Activated T-helper 1 cell treated with anti-CD3 and anti-CD28 coated beads, Interleukin-12 subunit alpha, Interleukin-12 subunit beta, Interleukin-2, Interleukin-4 antibody, amounts not matched to agents 30 ng/mL and 10 ng/mL and 1 ng/mL, durations not matched to agents 14 hours and 24 hours and 36 hours (primary cell): ENCODE measurements at regions of chr1 and their contacts with region 1.

Region 1: GRCh38 chr1:89310505-89310904 is 37.8 kb upstream of the GBP5 start:
- DNase-seq: no peak
- H3K4me3 Mint-ChIP-seq: peak overlapping the region; percentile 47
- H3K27ac Mint-ChIP-seq: peak overlapping the region; percentile 87
- H3K4me1 Mint-ChIP-seq: peaks cover 64% of the 10 kb centered on the region
- H3K27me3 Mint-ChIP-seq: no peaks in the 10 kb centered on the region

Region 2: DNA sequence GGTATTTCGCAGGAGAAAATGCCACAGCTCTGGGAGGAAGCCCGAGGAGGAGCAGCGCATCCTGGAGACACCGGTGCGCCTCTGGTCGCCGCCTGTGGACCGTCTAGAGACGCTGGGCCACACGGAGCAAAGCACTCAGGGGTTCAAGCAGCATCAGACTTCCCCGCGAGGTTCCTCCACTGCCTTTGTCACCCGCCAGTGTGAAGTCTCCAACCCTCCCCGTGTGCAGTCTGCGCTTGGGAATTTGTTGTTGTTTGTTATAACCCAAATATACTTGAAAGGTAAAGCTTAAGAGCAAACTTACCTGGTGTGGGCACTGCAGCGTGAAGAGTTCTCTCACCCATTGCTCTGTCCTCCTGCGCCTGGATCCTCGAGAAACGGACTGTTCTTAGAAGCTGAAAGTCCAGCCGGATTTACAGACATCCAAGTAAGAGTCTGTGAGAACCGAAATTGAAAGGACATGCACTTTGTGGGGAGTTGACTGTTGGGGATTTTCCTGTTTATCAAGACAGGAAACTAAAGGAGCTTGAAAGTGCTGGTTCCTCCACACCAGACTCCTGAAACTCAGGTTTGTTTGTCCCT is 111.9 kb before region 1 on chr1 and contains the start of gene GBP4:
- intact Hi-C with region 1: loop called (anchors 1 kb)
- DNase-seq: peak; percentile 43
- H3K4me3 Mint-ChIP-seq: peak within 1 kb of the TSS; percentile 93
- H3K27ac Mint-ChIP-seq: peak within 1 kb of the TSS; percentile 93
- H3K4me1 Mint-ChIP-seq: peaks cover 88% of the 10 kb centered on the region
- H3K27me3 Mint-ChIP-seq: no peaks in the 10 kb centered on the region
- total RNA-seq, gene GBP4: 36.8 and 37.5 TPM in 2 replicates

Region 3: DNA sequence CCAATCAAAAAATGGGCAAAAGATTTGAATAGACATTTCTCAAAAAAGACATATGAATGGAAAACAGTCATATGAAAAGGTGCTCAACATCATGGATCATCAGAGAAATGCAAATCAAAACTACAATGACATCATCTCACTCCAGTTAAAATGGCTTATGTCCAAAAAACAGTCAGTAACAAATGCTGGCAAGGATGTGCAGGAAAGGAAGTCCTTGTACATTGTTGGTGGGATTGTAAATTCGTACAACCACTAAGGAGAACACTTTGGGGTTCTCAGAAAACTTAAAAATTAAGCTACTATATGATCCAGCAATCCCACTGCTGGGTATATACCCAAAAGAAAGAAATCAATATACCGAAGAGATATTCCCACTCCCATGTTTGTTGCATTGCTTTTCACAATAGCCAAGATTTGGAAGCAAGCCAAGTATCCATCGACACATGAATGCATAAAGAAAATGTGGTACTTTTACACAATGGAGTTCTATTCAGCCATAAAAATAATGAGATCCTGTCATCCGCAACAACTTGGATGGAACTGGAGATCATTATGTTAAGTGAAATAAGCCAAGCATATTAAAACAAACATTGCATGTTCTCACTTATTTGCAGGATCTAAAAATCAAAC is 55.7 kb before region 1 on chr1:
- intact Hi-C with region 1: no loop called
- DNase-seq: no peak
- H3K4me3 Mint-ChIP-seq: no peak overlapping the region
- H3K27ac Mint-ChIP-seq: no peak overlapping the region
- H3K4me1 Mint-ChIP-seq: peaks cover 78% of the 10 kb centered on the region
- H3K27me3 Mint-ChIP-seq: no peaks in the 10 kb centered on the region

Region 4: DNA sequence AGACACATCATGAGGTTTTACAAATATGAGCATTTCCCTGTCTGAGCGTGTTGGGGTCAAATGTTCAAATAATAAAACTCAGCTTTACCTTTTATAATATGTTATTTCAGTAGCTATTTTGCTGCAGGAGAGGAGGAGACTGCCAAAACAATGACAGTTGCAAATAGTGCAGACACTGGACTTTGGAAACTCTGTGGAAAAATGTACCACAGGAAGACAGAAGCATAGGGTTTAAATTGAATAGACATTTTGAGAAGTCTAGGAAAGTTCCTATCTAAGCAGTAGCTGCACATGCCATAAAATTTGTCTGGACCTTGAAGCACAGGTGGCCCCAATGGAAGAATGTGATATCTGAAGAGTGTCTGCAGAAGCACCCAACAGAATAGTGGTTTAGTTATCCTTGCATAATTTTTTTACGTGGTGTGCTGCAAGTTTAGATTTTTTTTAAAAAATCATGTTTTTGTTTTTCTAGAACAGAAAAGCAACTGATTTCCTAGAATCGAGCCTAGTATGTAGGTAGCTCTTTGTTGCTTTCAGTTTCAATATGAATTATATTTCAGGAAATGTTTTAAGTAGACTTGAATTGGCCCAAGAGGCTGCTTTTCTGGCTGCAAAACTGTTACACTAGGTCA is 23.8 kb before region 1 on chr1:
- intact Hi-C with region 1: loop called (anchors 1 kb)
- DNase-seq: peak; percentile 29
- H3K4me3 Mint-ChIP-seq: peak overlapping the region; percentile 41
- H3K27ac Mint-ChIP-seq: peak overlapping the region; percentile 92
- H3K4me1 Mint-ChIP-seq: peaks cover 83% of the 10 kb centered on the region
- H3K27me3 Mint-ChIP-seq: no peaks in the 10 kb centered on the region

Region 5: DNA sequence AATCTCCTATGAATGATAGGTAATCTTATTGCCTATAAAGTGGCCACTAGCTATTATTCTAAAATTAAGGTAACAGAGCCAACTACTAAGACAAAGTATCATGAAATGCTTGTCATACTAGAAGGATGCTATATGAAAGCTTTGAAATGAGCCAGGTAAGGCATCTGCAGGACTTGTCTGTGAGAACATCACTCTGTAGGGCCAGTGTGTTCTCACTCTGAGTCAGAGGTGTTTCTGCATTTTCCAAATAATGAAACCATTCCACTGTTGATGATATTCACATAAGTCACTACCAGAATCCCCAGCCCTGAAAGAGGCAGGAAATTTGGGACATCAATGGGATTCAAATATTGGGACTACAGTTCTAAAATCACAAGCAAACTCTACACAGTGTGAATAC is 12.0 kb before region 1 on chr1:
- intact Hi-C with region 1: loop called (anchors 1 kb)
- DNase-seq: no peak
- H3K4me3 Mint-ChIP-seq: peak overlapping the region; percentile 37
- H3K27ac Mint-ChIP-seq: peak overlapping the region; percentile 75
- H3K4me1 Mint-ChIP-seq: peaks cover 81% of the 10 kb centered on the region
- H3K27me3 Mint-ChIP-seq: no peaks in the 10 kb centered on the region